Activated CD8-positive, alpha-beta memory T cell treated with anti-CD3 and anti-CD28 coated beads, Interleukin-2, amount 10 ng/mL, durations not matched to agents 7 days and 5 days (primary cell): ENCODE measurements at regions of chr7 and their contacts with region 1.

Region 1: GRCh38 chr7:143345428-143345900 is 17.0 kb downstream of the FAM131B start:
- DNase-seq: peak; percentile 79
- ATAC-seq: peak; percentile 100
- H3K4me3 Mint-ChIP-seq: peak overlapping the region; percentile 61
- H3K27ac Mint-ChIP-seq: peak overlapping the region; percentile 49
- H3K4me1 Mint-ChIP-seq: peaks cover 12% of the 10 kb centered on the region
- H3K27me3 Mint-ChIP-seq: peaks cover 34% of the 10 kb centered on the region

Region 2: DNA sequence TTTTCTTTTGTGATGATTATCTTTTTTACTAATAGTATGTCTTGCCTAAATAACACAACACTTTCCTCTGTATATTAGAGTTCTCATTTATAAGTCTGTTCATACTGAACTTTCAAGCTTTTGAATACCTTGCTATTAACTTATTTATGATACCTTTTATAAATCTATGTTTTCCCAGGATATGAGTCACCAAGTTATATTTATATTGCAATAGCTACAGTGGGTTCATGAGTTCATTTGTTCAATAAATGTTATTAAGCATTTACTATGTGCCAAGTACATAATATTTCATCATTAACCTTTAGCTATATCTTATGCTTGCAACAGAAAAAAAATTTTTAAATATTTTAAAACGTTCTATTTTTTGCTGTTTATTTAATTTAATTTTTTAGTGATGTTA is 11.2 kb before region 1 on chr7:
- CTCF ChIA-PET with region 1: interaction called, 29 read pairs
- DNase-seq: no peak
- ATAC-seq: no peak
- H3K4me3 Mint-ChIP-seq: no peak overlapping the region
- H3K27ac Mint-ChIP-seq: no peak overlapping the region
- H3K4me1 Mint-ChIP-seq: no peaks in the 10 kb centered on the region
- H3K27me3 Mint-ChIP-seq: peaks cover 36% of the 10 kb centered on the region

Region 3: DNA sequence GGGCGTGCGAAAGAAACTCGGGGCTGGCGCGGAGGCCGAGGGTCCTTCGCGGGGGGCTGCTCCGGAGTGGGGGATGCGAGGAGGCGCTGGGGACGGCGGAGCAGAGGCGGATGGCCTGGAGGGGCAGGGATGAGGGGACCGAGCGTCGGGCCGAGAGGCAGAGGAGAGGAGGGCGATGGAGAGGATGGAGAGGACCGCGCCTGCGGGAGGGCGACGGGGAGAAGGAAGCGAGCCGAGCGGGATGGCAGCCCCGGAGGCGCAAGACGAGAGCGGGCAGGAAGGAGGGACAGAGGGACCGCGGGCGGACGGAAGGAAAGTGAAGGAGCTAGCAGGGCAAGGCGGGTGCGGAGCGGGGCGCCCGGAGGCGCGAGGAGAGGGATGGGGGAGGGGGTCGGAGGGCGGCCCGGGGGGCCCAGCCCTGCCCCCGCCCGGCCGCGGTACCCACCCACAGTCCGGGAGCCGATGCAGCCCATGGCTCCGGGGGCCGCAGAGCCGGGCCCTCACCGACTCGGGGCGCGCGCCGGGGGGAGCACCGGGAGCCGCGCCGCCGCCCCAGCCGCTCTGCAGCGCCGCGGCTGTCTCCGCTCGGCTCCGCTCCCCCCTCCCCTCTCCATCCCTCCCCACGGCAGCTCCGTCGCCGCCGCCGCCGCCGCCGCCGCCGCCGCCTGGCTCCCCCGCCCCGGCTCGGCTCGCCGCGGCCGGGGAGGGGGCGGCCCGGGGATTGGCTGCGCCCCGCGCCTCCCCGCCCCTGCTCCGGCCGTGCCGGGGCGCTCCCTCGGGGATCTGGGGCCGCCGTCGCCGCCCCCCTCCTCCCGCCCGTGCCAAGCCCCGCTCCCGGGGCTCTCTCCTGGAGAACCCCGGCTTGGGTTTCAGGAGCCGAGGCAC is 16.9 kb after region 1 on chr7 and contains the start of gene FAM131B:
- CTCF ChIA-PET with region 1: interaction called, 14 read pairs
- DNase-seq: no peak
- ATAC-seq: peak; percentile 78
- H3K4me3 Mint-ChIP-seq: peak within 1 kb of the TSS; percentile 80
- H3K27ac Mint-ChIP-seq: no peak within 1 kb of the TSS
- H3K4me1 Mint-ChIP-seq: peaks cover 5% of the 10 kb centered on the region
- H3K27me3 Mint-ChIP-seq: peaks cover 52% of the 10 kb centered on the region
- total RNA-seq, gene FAM131B: 2.3 to 2.6 TPM

Region 4: GRCh38 chr7:143372070-143372469 is 26.6 kb after region 1 on chr7:
- CTCF ChIA-PET with region 1: interaction called, 10 read pairs
- DNase-seq: peak; percentile 67
- ATAC-seq: peak; percentile 46
- H3K4me3 Mint-ChIP-seq: no peak overlapping the region
- H3K27ac Mint-ChIP-seq: peak overlapping the region; percentile 38
- H3K4me1 Mint-ChIP-seq: peaks cover 50% of the 10 kb centered on the region
- H3K27me3 Mint-ChIP-seq: no peaks in the 10 kb centered on the region